AG04450 (cell line): ENCODE measurements at regions of chr12 and their contacts with region 1.

Region 1: GRCh38 chr12:1474041-1474573 is 120.3 kb downstream of the FBXL14 start:
- DNase-seq: peak; percentile 92
- H3K4me3 ChIP-seq: peak overlapping the region; percentile 44
- H3K27ac ChIP-seq: peak overlapping the region; percentile 98
- H3K27me3 ChIP-seq: no peaks in the 10 kb centered on the region
- CTCF ChIP-seq: no peak

Region 2: DNA sequence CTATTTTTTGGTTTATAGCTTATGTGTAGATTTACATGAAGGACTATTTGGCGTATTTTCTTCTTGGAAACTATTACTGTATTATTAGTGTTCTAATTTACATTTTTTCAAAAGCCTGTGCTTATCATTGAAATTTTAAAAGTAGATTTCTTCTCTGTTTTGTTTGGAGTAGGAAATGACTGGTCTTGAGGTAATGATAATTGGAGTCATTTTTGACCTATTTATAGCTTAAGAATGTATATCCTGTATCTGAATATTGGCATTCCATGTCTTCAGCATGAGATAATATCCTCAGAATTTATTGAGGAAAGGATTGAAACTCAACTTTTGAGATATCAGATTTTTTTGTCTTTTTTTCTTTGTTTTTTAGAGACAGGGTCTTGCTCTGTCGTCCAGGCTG is 289.7 kb before region 1 on chr12:
- CTCF ChIA-PET with region 1: no interaction called
- POLR2A ChIA-PET with region 1: interaction called, 11 read pairs
- DNase-seq: no peak
- H3K4me3 ChIP-seq: no peak overlapping the region
- H3K27ac ChIP-seq: no peak overlapping the region
- H3K27me3 ChIP-seq: no peaks in the 10 kb centered on the region
- CTCF ChIP-seq: no peak

Region 3: DNA sequence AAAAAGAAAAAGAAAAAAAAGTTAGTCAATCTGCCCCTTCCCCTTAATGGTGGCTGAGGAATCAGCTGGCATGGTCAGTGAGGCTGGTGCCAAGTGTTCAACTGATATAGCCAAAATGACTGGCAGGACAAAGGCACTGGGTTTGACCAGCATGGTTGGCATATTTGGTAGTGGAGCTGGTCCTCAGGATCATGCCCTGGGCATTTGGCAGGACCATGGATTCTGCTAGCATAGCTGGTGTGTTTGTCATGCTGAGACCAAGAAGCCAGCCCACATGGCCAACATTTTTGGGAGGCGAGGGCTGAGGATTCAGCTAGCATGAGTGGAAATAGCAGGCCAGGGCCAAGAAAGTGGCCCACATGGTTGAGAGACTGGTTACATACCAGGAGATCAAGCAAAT is 16.2 kb before region 1 on chr12:
- CTCF ChIA-PET with region 1: no interaction called
- POLR2A ChIA-PET with region 1: interaction called, 14 read pairs
- DNase-seq: peak; percentile 55
- H3K4me3 ChIP-seq: no peak overlapping the region
- H3K27ac ChIP-seq: no peak overlapping the region
- H3K27me3 ChIP-seq: no peaks in the 10 kb centered on the region
- CTCF ChIP-seq: no peak

Region 4: GRCh38 chr12:1510056-1510812 is 36.1 kb after region 1 on chr12:
- CTCF ChIA-PET with region 1: no interaction called
- POLR2A ChIA-PET with region 1: no interaction called
- DNase-seq: no peak
- H3K4me3 ChIP-seq: no peak overlapping the region
- H3K27ac ChIP-seq: no peak overlapping the region
- H3K27me3 ChIP-seq: no peaks in the 10 kb centered on the region
- CTCF ChIP-seq: no peak